ENCODE measurements at regions of chr9 and their contacts with region 1.

Region 1: DNA sequence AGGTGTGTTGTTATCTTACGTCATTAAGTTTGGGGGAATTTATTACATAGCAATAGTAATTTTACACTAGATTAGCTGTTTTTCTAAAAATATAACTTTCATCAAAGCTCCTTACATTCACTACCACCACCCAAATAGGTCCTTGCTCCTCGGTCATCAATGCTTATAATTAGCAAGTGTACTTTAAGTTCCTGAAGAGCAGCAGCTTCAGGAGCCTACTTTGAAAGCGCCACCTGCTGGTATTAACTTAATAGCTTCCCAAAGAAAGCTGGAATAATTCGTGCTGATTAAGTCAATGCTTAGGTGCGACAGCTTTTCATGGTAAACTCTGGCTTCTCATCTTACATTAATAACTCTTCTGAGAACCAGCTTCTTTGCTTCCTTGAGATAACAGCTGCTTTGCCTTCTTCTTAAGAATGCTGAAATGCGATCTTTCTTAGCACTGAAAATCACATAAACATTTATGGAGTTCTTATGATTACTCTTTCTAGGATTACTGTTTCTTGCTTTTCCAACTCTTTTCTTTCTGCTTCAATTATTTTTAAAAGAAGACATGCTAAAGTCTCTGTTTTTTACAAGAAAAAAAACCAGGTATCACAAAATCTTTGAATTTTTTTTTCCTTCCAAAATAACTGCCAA is 10.0 kb upstream of the C5 start:
- DNase-seq: peak; percentile 42
- ATAC-seq: no peak
- H3K4me3 Mint-ChIP-seq: no peak overlapping the region
- H3K27ac Mint-ChIP-seq: no peak overlapping the region
- H3K4me1 Mint-ChIP-seq: peaks cover 14% of the 10 kb centered on the region
- H3K27me3 Mint-ChIP-seq: peaks cover 5% of the 10 kb centered on the region

Region 2: DNA sequence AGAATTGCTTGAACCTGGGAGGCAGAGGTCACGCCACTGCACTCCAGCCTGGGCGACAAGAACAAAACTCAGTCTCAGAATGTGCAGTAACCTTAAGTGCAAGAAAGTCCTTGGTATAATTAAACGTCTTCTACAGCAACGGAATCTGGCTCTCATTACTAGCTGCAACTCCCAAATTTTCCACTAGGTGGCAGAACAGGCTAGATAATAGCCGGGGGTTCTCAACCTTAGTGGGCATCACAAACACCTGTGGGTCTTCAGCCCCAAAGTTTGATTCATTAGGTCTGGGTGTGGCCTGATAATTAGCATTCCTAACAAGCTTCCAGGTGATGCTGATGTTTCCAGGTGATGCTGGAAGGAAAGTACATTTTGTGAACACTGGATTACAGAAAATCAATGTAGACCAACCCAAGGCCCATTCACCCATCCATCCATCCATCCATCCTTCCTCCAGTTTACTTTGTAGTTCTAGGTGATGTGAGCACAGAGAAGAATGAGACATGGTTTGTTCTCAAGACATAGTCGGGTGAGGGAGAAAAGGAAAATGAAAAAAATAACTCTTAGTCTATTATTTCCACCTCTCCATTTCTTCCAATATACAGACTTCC is 304.2 kb before region 1 on chr9:
- CTCF ChIA-PET with region 1: interaction called, 82 read pairs
- POLR2A ChIA-PET with region 1: no interaction called
- DNase-seq: peak; percentile 77
- ATAC-seq: peak; percentile 76
- H3K4me3 Mint-ChIP-seq: no peak overlapping the region
- H3K27ac Mint-ChIP-seq: no peak overlapping the region
- H3K4me1 Mint-ChIP-seq: peaks cover 15% of the 10 kb centered on the region
- H3K27me3 Mint-ChIP-seq: no peaks in the 10 kb centered on the region

Region 3: GRCh38 chr9:120999317-120999716 is 60.8 kb before region 1 on chr9:
- CTCF ChIA-PET with region 1: interaction called, 10 read pairs
- POLR2A ChIA-PET with region 1: no interaction called
- DNase-seq: no peak
- ATAC-seq: no peak
- H3K4me3 Mint-ChIP-seq: no peak overlapping the region
- H3K27ac Mint-ChIP-seq: no peak overlapping the region
- H3K4me1 Mint-ChIP-seq: no peaks in the 10 kb centered on the region
- H3K27me3 Mint-ChIP-seq: no peaks in the 10 kb centered on the region

Region 4: DNA sequence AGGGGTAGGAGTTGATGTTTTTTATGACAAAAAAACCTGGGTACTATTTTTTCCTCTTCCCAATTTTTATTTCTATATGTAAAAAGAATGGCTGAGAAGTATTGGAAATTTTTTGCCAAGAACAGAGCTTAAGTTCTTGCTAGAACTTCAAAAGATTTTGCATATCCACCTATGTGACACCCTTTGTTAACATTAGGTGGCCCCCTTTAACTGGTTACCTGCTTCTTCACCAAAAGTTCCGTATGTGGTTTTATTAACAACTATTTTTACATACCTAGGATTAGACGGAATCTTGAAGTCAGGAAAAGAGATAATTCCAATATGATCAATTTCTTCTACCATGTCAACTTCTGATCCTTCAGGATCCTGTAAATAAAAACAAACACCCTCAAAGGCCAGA is 25.6 kb before region 1 on chr9:
- CTCF ChIA-PET with region 1: interaction called, 23 read pairs
- POLR2A ChIA-PET with region 1: no interaction called
- DNase-seq: no peak
- ATAC-seq: no peak
- H3K4me3 Mint-ChIP-seq: no peak overlapping the region
- H3K27ac Mint-ChIP-seq: no peak overlapping the region
- H3K4me1 Mint-ChIP-seq: peaks cover 3% of the 10 kb centered on the region
- H3K27me3 Mint-ChIP-seq: peaks cover 2% of the 10 kb centered on the region

Region 5: DNA sequence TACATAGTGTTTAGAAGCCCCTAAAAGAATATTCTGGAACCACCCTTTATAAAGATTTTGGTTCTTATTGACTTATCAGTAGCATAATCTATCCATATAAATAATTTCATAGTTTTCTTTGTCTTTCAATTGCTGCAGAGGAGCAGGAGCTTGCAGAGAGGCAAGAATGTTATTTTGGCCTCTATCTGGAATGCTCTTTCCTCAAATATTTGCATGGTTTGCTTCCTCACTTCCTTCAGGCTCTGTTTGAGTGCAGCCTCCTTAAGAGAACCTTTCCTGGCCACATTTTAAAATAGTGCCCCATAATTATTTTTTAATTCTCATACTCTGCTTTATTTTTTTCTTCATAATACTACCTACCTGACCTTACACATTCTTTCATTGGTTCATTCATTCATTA is 11.5 kb before region 1 on chr9:
- CTCF ChIA-PET with region 1: interaction called, 30 read pairs
- POLR2A ChIA-PET with region 1: no interaction called
- DNase-seq: no peak
- ATAC-seq: no peak
- H3K4me3 Mint-ChIP-seq: no peak overlapping the region
- H3K27ac Mint-ChIP-seq: no peak overlapping the region
- H3K4me1 Mint-ChIP-seq: no peaks in the 10 kb centered on the region
- H3K27me3 Mint-ChIP-seq: no peaks in the 10 kb centered on the region

Region 6: DNA sequence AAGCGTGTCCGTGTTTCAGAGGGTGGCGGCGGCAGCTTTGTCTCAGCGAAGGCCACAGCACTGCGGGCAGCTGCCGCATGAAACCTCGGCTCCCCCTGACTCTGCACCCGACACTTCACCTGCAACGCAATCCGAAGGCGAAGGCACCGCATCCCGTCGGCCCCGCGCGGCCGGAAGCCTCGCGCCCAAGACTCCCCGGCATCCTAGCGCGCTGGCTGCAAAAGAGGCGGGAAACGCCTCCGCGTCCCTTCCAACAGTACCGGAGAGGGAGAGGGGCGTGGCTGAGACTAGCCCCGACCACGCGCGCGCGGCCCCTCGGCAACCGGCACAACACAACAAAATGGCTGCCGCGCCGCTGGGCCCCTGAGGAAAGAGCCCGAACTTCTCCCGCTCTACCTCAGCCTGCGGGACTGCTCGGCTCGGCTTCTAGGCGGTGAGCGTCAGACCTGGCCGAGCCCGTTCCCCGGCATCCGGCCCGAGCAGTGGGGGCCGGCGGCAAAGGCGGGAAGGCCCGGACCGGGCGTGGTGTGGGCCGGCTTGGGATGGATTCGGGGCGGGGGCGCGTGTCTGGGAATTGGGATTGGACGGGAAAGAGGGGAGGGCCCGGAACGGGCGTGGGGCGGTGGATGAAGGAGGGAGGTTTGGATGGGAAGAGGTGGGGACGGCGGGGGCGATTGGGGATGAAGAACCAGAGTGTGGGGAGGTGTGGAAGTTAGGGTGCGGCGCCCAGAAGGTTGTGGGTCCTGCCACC is 14.7 kb after region 1 on chr9 and contains the start of gene CNTRL:
- CTCF ChIA-PET with region 1: interaction called, 70 read pairs
- POLR2A ChIA-PET with region 1: no interaction called
- DNase-seq: peak; percentile 96
- ATAC-seq: peak; percentile 87
- H3K4me3 Mint-ChIP-seq: peak within 1 kb of the TSS; percentile 99
- H3K27ac Mint-ChIP-seq: peak within 1 kb of the TSS; percentile 98
- H3K4me1 Mint-ChIP-seq: peaks cover 53% of the 10 kb centered on the region
- H3K27me3 Mint-ChIP-seq: no peaks in the 10 kb centered on the region
- total RNA-seq, gene CNTRL: 80.8 to 84.3 TPM

Region 7: GRCh38 chr9:121082075-121082474 is 22.0 kb after region 1 on chr9:
- CTCF ChIA-PET with region 1: interaction called, 13 read pairs
- POLR2A ChIA-PET with region 1: no interaction called
- DNase-seq: no peak
- ATAC-seq: no peak
- H3K4me3 Mint-ChIP-seq: no peak overlapping the region
- H3K27ac Mint-ChIP-seq: no peak overlapping the region
- H3K4me1 Mint-ChIP-seq: peaks cover 13% of the 10 kb centered on the region
- H3K27me3 Mint-ChIP-seq: no peaks in the 10 kb centered on the region